AG04450 (cell line): ENCODE measurements at regions of chr9 and their contacts with region 1.

Region 1: GRCh38 chr9:105608721-105609598 is 51.0 kb downstream of the FKTN start:
- DNase-seq: peak; percentile 11
- H3K4me3 ChIP-seq: no peak overlapping the region
- H3K27ac ChIP-seq: no peak overlapping the region
- H3K27me3 ChIP-seq: no peaks in the 10 kb centered on the region
- CTCF ChIP-seq: peak; percentile 60

Region 2: DNA sequence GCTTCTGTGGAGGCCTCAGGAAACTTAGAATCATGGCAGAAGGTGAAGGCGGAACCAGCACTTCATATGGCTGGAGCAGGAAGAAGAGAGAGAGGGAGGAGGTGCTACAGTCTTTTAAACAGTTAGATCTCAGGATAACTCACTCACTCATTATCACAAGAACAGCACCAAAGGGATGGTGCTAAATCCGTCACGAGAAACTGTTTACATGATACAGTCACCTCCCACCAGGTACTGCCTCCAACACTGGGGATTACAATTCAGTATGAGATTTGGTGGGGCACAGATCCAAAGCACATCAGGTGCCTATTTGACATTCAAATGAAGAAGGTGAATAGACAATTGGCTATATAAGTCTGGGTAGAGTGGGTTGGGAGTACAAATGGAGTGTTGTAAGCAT is 15.8 kb before region 1 on chr9:
- CTCF ChIA-PET with region 1: interaction called, 17 read pairs
- POLR2A ChIA-PET with region 1: no interaction called
- DNase-seq: no peak
- H3K4me3 ChIP-seq: no peak overlapping the region
- H3K27ac ChIP-seq: no peak overlapping the region
- H3K27me3 ChIP-seq: no peaks in the 10 kb centered on the region
- CTCF ChIP-seq: no peak

Region 3: GRCh38 chr9:105621001-105621400 is 12.0 kb after region 1 on chr9:
- CTCF ChIA-PET with region 1: interaction called, 19 read pairs
- POLR2A ChIA-PET with region 1: no interaction called
- DNase-seq: no peak
- H3K4me3 ChIP-seq: no peak overlapping the region
- H3K27ac ChIP-seq: no peak overlapping the region
- H3K27me3 ChIP-seq: no peaks in the 10 kb centered on the region
- CTCF ChIP-seq: no peak

Region 4: GRCh38 chr9:105694190-105694847 is 85.4 kb after region 1 on chr9 and contains the start of gene TMEM38B:
- CTCF ChIA-PET with region 1: interaction called, 15 read pairs
- POLR2A ChIA-PET with region 1: no interaction called
- DNase-seq: no peak
- H3K4me3 ChIP-seq: peak within 1 kb of the TSS; percentile 78
- H3K27ac ChIP-seq: no peak within 1 kb of the TSS
- H3K27me3 ChIP-seq: peaks cover 8% of the 10 kb centered on the region
- CTCF ChIP-seq: no peak
- polyA plus RNA-seq, gene TMEM38B: 5.1 and 7.5 TPM in 2 replicates

Region 5: DNA sequence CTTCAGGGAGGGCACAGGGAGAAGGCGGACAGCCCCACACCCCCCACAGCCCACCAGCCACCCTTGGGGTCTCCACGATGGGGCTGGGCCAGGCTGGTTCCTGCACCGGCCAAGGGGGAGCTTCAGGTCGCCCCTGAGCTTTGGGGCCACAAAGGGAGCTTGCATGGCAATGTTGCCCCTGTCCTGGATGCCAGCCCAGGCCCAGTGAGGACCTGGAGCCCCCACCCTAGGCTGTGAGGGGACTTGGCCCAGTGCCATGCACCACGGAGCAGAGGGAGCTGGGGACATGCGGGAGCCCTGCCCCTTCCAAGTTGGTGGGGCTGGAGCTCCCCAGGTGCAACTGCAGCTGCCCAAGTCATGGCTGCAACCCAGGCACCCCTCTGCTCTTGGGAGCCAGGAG is 103.8 kb after region 1 on chr9:
- CTCF ChIA-PET with region 1: interaction called, 56 read pairs
- POLR2A ChIA-PET with region 1: no interaction called
- DNase-seq: no peak
- H3K4me3 ChIP-seq: no peak overlapping the region
- H3K27ac ChIP-seq: no peak overlapping the region
- H3K27me3 ChIP-seq: no peaks in the 10 kb centered on the region
- CTCF ChIP-seq: no peak

Region 6: DNA sequence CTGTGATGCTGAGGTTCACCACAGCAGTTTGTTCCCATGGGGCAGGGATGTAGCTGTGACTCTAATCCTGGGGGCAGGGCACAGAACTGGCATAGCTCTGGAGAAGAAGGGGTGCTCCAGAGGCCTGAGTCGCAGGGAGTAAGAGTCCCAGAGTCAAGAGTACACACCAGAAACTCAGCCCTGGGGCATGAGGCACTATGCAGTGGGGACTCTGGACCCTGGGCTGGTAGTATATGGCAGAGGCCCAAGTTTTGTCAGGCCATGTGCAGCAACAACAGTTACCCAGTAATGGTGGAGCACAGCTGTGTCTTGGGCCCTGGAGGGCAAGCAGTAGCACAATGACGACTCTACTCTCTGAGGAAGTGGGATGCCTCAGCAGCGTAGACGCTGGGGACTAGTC is 128.2 kb after region 1 on chr9:
- CTCF ChIA-PET with region 1: no interaction called
- POLR2A ChIA-PET with region 1: no interaction called
- DNase-seq: no peak
- H3K4me3 ChIP-seq: no peak overlapping the region
- H3K27ac ChIP-seq: no peak overlapping the region
- H3K27me3 ChIP-seq: no peaks in the 10 kb centered on the region
- CTCF ChIP-seq: no peak

Region 7: DNA sequence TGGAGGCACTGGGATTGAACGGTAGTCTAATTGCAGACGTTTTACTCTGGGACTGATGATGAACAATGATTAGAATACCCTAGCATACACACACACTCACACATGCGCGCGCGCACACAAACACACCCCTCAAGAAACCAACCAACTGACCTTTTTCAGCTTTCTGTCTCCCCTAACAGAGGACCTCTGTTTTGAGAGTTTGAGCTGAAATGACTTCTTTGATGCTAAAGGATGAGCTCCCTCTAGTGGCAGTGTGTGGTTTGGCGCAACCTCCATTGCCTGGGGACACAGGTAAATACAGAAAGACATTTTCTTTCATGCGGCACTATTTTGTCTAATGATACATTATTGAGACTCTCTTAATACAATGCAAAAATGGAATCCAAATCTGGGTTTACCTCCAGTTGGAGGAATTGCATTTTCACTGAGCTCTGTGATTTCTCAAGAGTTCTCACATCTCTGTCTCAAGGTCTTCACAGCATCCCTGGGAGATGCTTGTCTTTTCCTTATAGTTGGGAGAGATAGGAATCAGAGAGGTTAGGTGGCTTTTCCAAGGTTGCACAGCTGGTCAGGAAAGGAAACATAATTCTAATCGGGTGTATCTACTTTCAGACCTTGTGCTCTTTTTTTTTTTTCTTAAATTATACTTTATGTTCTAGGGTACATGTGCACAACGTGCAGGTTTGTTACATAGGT is 272.8 kb after region 1 on chr9:
- CTCF ChIA-PET with region 1: interaction called, 12 read pairs
- POLR2A ChIA-PET with region 1: no interaction called
- DNase-seq: peak; percentile 10
- H3K4me3 ChIP-seq: no peak overlapping the region
- H3K27ac ChIP-seq: no peak overlapping the region
- H3K27me3 ChIP-seq: no peaks in the 10 kb centered on the region
- CTCF ChIP-seq: peak; percentile 86